GM10248 (cell line): ENCODE measurements at regions of chr12 and their contacts with region 1.

Region 1: DNA sequence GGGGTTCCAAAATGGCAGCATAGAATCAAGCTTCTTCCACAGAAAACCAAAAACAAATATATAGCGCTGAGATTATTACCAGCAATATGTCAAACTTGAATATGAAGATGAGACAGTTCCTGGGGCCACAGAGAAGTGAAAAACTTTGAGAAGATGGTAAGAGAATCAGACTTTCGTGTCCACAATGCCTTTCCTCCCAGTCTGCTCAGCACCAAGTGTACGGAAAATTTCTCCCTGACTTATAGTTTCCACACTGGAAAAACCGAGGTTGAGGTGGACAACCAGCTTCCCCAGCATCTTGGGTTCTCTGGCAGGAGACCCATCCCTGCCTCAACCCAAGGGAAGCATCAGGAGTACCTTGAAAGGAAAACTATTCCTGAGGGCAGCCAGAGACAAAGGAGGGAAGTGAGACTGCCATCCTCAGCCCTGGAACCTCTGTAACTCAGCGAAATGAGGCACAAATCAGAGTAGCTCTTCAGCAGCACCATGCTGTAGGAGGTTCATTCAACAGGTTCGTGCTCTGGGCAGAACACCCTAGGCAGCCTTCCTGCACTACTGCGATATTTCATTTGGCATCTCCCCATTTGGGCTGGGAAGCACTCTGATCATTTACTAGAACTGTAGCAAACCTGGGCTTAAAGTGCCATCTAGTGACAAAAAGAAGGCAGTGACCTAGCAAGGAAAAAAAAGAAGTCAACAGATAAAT is 52.4 kb upstream of the CAPRIN2 start:
- DNase-seq: no peak
- CTCF ChIP-seq: peak; percentile 70

Region 2: DNA sequence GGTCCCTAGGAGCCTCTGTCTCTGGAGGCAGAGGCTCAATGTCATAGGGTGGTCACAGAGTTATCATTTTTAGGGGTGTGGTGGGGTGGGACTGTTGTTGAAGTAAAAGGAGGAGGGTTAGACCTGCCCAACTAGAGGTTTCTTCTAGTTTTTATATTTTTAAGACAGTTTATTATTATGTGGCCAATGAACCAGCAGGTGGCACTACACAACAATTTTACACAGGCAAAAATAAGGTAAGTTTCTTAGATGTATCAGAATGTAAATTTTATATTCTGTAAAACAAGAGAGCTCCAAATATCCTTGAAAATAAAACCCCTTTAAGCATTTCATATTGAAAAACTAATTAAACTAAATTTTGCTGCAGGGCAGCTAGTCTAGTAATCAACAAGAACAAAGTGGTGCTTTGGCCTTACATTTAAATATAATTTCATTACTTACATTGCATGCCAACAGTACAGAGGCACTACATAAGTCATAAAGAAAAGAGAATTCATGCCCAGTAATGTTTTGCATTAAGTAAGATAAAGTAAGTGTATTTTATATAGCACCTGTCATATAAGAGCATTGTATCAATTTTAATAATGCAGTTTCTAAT is 1287.5 kb before region 1 on chr12:
- CTCF ChIA-PET with region 1: interaction called, 28 read pairs
- POLR2A ChIA-PET with region 1: no interaction called
- DNase-seq: peak; percentile 21
- CTCF ChIP-seq: peak; percentile 40

Region 3: DNA sequence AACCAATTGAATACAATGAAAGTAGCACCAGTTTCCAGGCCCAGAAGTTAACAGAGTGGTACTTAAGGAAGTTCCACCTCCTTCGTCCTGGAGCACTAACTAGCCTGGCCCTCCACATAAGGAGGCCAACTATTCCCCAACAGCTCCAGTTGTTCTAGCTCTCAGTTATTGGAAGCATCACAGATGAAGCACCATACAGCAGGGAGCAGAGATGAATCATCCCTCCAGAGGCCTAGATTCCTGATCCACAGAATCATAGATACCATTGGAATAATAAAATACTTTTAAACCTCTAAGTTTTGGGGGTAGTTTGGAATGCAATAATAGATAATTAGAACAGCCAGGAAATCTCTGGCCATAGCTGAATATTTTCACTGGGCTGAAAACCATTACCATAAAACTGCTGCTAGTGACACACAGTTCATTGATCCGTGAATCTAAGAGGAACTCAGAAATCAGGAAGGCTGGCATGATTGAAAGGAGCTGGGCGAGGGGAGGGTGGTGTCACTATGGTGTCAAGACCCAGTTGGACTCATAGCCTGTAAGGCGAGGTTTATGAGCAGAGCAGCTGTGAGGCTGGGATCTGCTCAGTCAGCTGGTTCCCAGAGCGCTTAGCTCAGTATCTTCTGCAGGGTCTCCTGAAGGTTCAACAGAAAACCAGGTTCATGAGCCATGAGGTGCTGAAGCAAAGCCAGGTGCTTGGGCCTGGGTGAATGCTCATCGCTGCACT is 652.0 kb before region 1 on chr12:
- CTCF ChIA-PET with region 1: no interaction called
- POLR2A ChIA-PET with region 1: no interaction called
- DNase-seq: no peak
- CTCF ChIP-seq: no peak

Region 4: GRCh38 chr12:30769802-30770201 is 37.3 kb before region 1 on chr12:
- CTCF ChIA-PET with region 1: interaction called, 10 read pairs
- POLR2A ChIA-PET with region 1: no interaction called
- DNase-seq: no peak
- CTCF ChIP-seq: no peak

Region 5: DNA sequence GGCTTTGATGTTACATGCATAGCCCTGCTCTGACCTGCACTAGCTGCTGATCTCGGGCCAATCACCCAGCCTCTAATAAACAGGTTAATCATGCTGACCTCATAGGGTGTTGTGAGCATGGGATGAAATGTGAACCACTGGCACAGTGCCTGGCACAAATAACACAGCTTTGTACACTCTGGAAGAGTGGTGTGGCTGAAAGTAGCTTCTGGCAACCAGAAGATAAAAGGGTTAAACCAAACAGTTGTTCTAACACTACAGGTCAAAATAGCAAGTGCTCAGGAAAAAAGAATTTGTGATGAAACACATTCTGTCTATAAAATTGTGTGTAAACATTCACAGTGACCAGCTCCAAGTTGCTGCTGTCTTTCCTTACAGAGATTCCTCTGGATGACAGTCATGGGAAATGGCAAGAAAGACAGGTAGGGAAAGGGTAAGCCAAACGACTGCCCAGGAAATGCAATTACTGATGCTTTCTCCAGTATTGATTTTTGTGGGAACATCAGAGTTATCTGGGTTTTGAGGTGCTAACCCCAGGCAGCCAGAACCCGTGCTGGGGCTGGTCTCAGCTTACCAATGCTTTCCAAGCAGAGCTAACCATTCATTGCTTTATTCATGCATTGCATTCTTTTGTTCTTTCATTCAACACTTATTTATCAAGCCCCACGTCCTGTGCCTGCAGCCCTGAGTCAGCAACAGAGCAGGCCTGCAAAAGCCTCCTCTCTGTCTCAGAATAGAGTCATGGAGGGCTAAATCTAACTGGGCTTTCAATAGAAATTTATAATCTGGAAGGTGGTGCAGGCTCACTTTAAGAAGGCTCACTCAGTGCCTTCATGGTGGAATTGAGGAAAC is 14.3 kb before region 1 on chr12:
- CTCF ChIA-PET with region 1: interaction called, 19 read pairs
- POLR2A ChIA-PET with region 1: no interaction called
- DNase-seq: no peak
- CTCF ChIP-seq: no peak